ENCODE measurements at regions of chr2 and their contacts with region 1.

Region 1: DNA sequence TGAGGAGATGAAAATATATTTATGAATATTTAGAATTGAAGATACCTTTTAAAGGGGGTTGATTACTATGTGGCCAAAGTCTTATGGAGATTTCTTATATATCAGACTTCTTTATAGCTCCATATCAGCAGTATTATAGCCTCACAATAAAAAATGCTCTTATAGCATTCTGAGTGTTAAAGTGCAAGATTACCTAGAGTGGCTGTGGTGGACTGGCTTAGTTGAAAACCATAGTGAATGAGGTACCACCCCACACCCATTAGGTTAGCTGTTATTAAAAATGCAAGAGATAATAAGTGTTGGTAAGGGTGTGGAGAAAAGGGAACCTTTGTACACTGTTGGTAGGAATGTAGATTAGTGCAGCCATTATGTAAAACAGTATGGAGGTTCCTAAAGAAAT is 39.7 kb downstream of the NCOA1 start:
- DNase-seq: no peak
- H3K4me3 ChIP-seq: no peak overlapping the region
- H3K27ac ChIP-seq: no peak overlapping the region
- H3K4me1 ChIP-seq: no peaks in the 10 kb centered on the region
- H3K27me3 ChIP-seq: no peaks in the 10 kb centered on the region
- CTCF ChIP-seq: no peak
- POLR2A ChIP-seq: no peak

Region 2: DNA sequence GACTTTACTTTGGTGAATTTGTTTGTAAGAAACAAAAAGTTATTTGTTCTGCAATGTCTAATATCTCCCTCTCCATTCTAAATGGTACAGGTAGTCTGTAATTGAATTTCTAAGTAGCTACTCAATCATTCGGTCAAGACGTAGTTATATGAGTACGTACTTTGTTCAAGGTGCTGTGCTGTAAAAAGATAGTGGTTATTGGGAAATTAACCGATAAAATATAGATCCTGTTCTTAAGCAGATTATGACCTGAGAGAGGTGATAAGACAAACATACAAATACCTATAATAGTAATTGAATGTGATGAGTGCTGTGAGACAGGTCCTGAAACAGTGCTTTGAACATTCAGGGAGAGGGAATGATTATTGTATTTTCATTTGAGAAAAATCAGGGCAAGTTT is 32.7 kb before region 1 on chr2:
- intact Hi-C with region 1: loop called (anchors 2 kb)
- DNase-seq: no peak
- H3K4me3 ChIP-seq: no peak overlapping the region
- H3K27ac ChIP-seq: no peak overlapping the region
- H3K4me1 ChIP-seq: peaks cover 80% of the 10 kb centered on the region
- H3K27me3 ChIP-seq: no peaks in the 10 kb centered on the region
- CTCF ChIP-seq: no peak
- POLR2A ChIP-seq: no peak

Region 3: GRCh38 chr2:25131567-25132298 is 600.9 kb after region 1 on chr2:
- intact Hi-C with region 1: no loop called
- DNase-seq: no peak
- H3K4me3 ChIP-seq: peak overlapping the region; percentile 25 to 40
- H3K27ac ChIP-seq: no peak overlapping the region
- H3K4me1 ChIP-seq: peaks cover 10% of the 10 kb centered on the region
- H3K27me3 ChIP-seq: no peaks in the 10 kb centered on the region
- CTCF ChIP-seq: no peak
- POLR2A ChIP-seq: no peak

Measured in vagina (tissue), 2 donors.